MCF 10A (cell line): ENCODE measurements at regions of chr1 and their contacts with region 1.

Region 1: GRCh38 chr1:33127001-33127791 is 46.2 kb downstream of the AZIN2 start:
- DNase-seq: peak; percentile 98
- H3K4me3 Mint-ChIP-seq: peak overlapping the region; percentile 95
- H3K27ac Mint-ChIP-seq: peak overlapping the region; percentile 97
- H3K4me1 Mint-ChIP-seq: peaks cover 30% of the 10 kb centered on the region
- H3K27me3 Mint-ChIP-seq: no peaks in the 10 kb centered on the region
- CTCF ChIP-seq: peak; percentile 85

Region 2: DNA sequence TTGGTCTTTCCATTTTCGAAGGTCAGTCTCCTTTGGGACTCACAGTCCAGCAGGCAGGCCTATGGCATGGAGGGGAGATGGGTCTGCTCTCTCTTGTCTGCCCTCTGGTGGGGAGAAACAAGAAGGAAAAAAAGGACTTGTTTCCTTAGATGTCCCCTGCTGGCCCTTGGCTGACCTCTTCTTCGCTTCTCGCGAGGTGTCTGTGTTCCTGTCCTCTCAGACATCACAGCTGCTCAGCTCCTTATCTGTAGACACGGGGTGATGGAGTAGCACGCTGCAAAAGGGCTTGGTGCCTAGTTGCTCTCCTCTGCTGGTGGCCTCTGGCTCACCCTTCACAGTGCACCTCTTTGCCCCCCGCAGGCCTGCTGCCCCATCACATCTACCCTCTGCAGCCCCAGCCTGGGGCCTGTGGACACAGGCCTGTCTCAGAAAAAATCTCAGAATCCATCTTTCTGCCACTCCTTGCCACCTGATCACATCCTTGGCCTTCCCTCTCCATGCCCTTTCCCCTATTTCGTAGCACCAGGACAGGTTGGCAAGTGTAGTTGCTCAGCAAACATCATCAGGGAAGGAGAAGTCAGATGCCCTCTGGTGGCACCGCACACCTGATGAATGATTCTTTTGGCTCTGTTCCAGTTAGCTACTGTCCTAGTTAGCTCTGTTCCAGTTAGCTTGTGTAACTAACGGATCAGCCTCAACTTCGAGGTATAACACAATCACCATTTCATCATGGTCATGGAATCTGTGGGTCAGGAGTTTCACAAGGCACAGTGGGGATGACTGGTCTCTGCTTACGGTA is 71.8 kb before region 1 on chr1:
- CTCF ChIA-PET with region 1: no interaction called
- POLR2A ChIA-PET with region 1: no interaction called
- intact Hi-C with region 1: no loop called
- DNase-seq: peak; percentile 88
- H3K4me3 Mint-ChIP-seq: no peak overlapping the region
- H3K27ac Mint-ChIP-seq: peak overlapping the region; percentile 36
- H3K4me1 Mint-ChIP-seq: peaks cover 17% of the 10 kb centered on the region
- H3K27me3 Mint-ChIP-seq: no peaks in the 10 kb centered on the region
- CTCF ChIP-seq: peak; percentile 57

Region 3: DNA sequence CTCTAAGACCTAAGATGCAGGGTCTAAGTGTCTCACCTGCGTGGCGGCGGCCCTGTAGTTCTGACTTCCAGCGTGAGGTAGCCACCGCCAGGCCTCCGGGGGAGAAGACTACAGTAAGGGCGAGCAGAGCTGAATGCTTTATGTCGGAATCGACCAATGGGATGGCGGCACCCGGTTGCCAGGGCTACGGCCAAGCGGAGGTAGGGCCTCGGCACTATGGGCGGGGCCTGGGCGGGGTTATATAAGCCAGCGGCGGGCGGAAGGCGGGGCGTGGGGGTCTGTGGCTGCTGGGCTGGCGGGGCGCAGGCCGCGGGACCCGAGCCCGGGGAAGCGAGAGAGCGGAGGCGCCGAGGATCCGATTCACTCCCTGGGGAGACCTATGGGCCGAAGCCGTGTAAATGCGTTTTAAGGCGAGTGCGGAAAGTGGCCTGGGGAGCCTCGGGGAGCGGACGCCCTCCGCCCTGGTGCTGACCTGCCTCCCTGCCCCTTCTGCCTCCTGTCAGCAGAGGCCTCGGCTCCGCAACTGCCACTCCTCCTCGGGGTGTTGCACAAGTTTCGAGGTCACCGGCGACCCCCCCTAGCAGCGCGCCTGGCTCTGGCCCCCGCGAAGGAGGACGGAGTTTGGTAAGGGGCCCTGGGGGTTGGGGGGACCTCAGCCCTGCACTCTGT is 46.2 kb before region 1 on chr1 and contains the start of gene AZIN2:
- CTCF ChIA-PET with region 1: interaction called, 4 read pairs
- POLR2A ChIA-PET with region 1: interaction called, 10 read pairs
- intact Hi-C with region 1: no loop called
- DNase-seq: peak; percentile 94
- H3K4me3 Mint-ChIP-seq: peak within 1 kb of the TSS; percentile 75
- H3K27ac Mint-ChIP-seq: peak within 1 kb of the TSS; percentile 59
- H3K4me1 Mint-ChIP-seq: peaks cover 20% of the 10 kb centered on the region
- H3K27me3 Mint-ChIP-seq: no peaks in the 10 kb centered on the region
- CTCF ChIP-seq: no peak
- total RNA-seq, gene AZIN2: 1.6 and 4.3 TPM in 2 replicates

Region 4: GRCh38 chr1:33094971-33095604 is 32.1 kb before region 1 on chr1:
- CTCF ChIA-PET with region 1: interaction called, 18 read pairs
- POLR2A ChIA-PET with region 1: interaction called, 6 read pairs
- intact Hi-C with region 1: loop called (anchors 1 kb)
- DNase-seq: peak; percentile 70
- H3K4me3 Mint-ChIP-seq: no peak overlapping the region
- H3K27ac Mint-ChIP-seq: no peak overlapping the region
- H3K4me1 Mint-ChIP-seq: peaks cover 18% of the 10 kb centered on the region
- H3K27me3 Mint-ChIP-seq: no peaks in the 10 kb centered on the region
- CTCF ChIP-seq: peak; percentile 91

Region 5: GRCh38 chr1:33111970-33112369 is 15.2 kb before region 1 on chr1:
- CTCF ChIA-PET with region 1: interaction called, 16 read pairs
- POLR2A ChIA-PET with region 1: interaction called, 5 read pairs
- intact Hi-C with region 1: no loop called
- DNase-seq: peak; percentile 29
- H3K4me3 Mint-ChIP-seq: no peak overlapping the region
- H3K27ac Mint-ChIP-seq: no peak overlapping the region
- H3K4me1 Mint-ChIP-seq: no peaks in the 10 kb centered on the region
- H3K27me3 Mint-ChIP-seq: no peaks in the 10 kb centered on the region
- CTCF ChIP-seq: peak; percentile 27

Region 6: GRCh38 chr1:33140153-33141149 is 13.3 kb after region 1 on chr1:
- CTCF ChIA-PET with region 1: interaction called, 15 read pairs
- POLR2A ChIA-PET with region 1: interaction called, 3 read pairs
- intact Hi-C with region 1: no loop called
- DNase-seq: peak; percentile 25
- H3K4me3 Mint-ChIP-seq: no peak overlapping the region
- H3K27ac Mint-ChIP-seq: peak overlapping the region; percentile 8
- H3K4me1 Mint-ChIP-seq: no peaks in the 10 kb centered on the region
- H3K27me3 Mint-ChIP-seq: peaks cover 12% of the 10 kb centered on the region
- CTCF ChIP-seq: no peak

Region 7: GRCh38 chr1:33147997-33148314 is 20.8 kb after region 1 on chr1:
- CTCF ChIA-PET with region 1: interaction called, 11 read pairs
- POLR2A ChIA-PET with region 1: no interaction called
- intact Hi-C with region 1: no loop called
- DNase-seq: peak; percentile 55
- H3K4me3 Mint-ChIP-seq: no peak overlapping the region
- H3K27ac Mint-ChIP-seq: no peak overlapping the region
- H3K4me1 Mint-ChIP-seq: no peaks in the 10 kb centered on the region
- H3K27me3 Mint-ChIP-seq: no peaks in the 10 kb centered on the region
- CTCF ChIP-seq: peak; percentile 14

Region 8: DNA sequence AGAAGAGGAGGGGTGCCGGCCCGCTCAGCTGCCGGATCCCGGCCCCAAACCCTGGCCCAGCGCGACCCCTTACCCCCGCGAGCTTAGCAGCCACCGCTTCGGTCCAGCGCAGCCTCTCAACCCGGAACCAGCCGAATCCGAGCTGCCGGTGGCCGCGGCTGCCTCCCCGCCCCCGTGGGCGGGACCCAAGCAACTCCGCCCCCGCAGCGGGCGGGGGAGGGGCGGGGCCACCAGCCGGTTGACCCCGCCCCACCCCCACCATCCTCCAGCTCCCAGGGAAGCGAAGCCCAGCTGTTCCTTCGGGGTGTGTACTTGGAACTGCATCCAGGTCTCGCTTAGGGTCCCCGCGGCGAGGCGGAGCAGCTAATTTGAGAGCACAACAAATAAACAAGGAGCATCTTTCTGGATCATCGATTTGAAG is 54.7 kb after region 1 on chr1 and contains the start of gene TRIM62:
- CTCF ChIA-PET with region 1: interaction called, 12 read pairs
- POLR2A ChIA-PET with region 1: interaction called, 13 read pairs
- intact Hi-C with region 1: loop called (anchors 5 kb)
- DNase-seq: peak; percentile 85
- H3K4me3 Mint-ChIP-seq: peak within 1 kb of the TSS; percentile 77
- H3K27ac Mint-ChIP-seq: no peak within 1 kb of the TSS
- H3K4me1 Mint-ChIP-seq: peaks cover 8% of the 10 kb centered on the region
- H3K27me3 Mint-ChIP-seq: no peaks in the 10 kb centered on the region
- CTCF ChIP-seq: no peak
- total RNA-seq, gene TRIM62: 2.4 and 2.8 TPM in 2 replicates